Activated CD4-positive, alpha-beta T cell treated with anti-CD3 and anti-CD28 coated beads for 36 hours (primary cell): ENCODE measurements at regions of chr4 and their contacts with region 1.

Region 1: DNA sequence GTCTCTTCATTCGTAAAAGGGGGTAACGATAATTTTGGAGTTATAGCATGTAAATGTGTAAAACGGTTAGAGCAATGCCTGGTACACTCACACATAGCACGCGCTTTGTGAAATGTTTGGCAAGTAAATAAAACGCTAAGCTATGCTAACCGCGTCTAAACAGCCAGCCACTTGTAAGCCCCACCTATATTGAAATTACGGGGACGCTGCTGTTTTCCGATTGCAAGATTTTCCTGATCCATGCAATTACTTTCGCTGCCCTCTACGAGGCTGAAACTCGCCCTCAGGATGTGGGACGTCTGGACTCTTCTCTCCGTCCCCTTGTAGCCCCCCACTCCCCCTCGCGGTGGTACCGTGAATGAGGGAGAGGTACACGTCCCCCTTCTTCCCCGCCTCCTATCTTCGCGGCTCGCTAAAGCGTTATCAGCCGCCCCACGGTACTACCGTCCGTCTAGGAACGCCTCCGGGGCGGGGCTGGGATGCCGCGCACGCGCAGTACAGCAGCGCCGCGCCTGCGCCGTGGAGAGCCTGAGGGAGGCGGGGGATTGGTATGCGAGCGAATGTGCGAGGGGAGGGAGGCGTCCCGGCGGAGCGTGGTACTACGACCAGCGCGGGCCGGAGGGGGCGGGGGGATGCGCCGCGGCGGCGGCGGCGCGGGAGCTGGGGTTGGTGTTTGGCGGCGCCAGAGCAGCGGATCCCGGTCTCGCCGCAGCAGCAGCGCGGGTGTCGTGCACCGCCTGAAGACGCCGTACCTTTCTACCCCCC is at the start of gene STIM2:
- DNase-seq: peak; percentile 98
- ATAC-seq: peak; percentile 68
- H3K4me3 Mint-ChIP-seq: peak within 1 kb of the TSS; percentile 91
- H3K27ac Mint-ChIP-seq: peak within 1 kb of the TSS; percentile 95
- H3K4me1 Mint-ChIP-seq: peaks cover 51% of the 10 kb centered on the region
- H3K27me3 Mint-ChIP-seq: no peaks in the 10 kb centered on the region
- total RNA-seq, gene STIM2: 32.9 to 36.4 TPM

Region 2: GRCh38 chr4:25234390-25235370 is 1625.7 kb before region 1 on chr4:
- CTCF ChIA-PET with region 1: no interaction called
- POLR2A ChIA-PET with region 1: no interaction called
- intact Hi-C with region 1: loop called in 1 of 2 experiments (anchors 10 kb)
- DNase-seq: peak; percentile 58
- ATAC-seq: peak; percentile 62
- H3K4me3 Mint-ChIP-seq: peak overlapping the region; percentile 91
- H3K27ac Mint-ChIP-seq: peak overlapping the region; percentile 97
- H3K4me1 Mint-ChIP-seq: peaks cover 45% of the 10 kb centered on the region
- H3K27me3 Mint-ChIP-seq: no peaks in the 10 kb centered on the region

Region 3: DNA sequence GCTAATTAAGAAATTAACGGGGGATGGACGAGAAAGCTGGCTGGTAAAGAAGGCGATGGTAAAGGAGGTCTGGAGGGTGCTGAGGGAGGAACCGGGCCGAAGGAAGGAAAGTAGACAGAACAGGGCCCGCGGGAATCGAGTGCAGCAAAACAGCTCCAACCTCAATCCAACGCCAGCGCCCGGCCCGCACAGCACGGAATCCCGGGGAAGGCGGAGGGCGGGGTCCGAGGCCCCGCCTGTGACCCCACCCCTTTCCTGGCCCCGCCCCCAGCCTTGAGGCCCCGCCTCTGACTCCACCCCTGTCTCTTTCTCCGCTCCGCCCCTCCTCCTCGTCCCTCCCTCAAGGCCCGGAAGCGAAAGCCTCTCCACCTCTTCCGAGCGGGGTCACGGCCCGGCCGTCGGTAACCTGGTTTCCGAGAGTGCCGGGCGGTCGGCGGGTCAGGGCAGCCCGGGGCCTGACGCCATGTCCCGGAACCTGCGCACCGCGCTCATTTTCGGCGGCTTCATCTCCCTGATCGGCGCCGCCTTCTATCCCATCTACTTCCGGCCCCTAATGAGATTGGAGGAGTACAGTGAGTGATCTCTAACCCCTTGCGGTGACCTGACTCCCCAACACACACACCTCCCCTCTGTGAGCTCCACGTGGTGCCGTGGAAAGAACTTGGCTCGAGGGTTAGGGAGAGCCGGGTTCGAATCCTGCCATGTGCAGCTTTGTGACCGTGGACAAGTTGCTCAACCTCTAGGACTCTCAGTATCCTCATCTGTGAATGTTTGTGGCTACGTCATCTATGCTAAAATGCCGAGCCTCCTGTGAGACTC is 946.3 kb before region 1 on chr4 and contains the start of gene SMIM20:
- CTCF ChIA-PET with region 1: no interaction called
- POLR2A ChIA-PET with region 1: no interaction called
- intact Hi-C with region 1: loop called in 1 of 2 experiments (anchors 1 kb)
- DNase-seq: peak; percentile 94
- ATAC-seq: peak; percentile 96
- H3K4me3 Mint-ChIP-seq: peak within 1 kb of the TSS; percentile 93
- H3K27ac Mint-ChIP-seq: peak within 1 kb of the TSS; percentile 93
- H3K4me1 Mint-ChIP-seq: peaks cover 22% of the 10 kb centered on the region
- H3K27me3 Mint-ChIP-seq: no peaks in the 10 kb centered on the region
- total RNA-seq, gene SMIM20: 15.6 to 23.0 TPM

Region 4: GRCh38 chr4:26410385-26411293 is 449.7 kb before region 1 on chr4:
- CTCF ChIA-PET with region 1: no interaction called
- POLR2A ChIA-PET with region 1: no interaction called
- intact Hi-C with region 1: no loop called
- DNase-seq: peak; percentile 32
- ATAC-seq: peak; percentile 75
- H3K4me3 Mint-ChIP-seq: no peak overlapping the region
- H3K27ac Mint-ChIP-seq: no peak overlapping the region
- H3K4me1 Mint-ChIP-seq: peaks cover 3% of the 10 kb centered on the region
- H3K27me3 Mint-ChIP-seq: no peaks in the 10 kb centered on the region

Region 5: GRCh38 chr4:26459054-26459755 is 401.1 kb before region 1 on chr4:
- CTCF ChIA-PET with region 1: no interaction called
- POLR2A ChIA-PET with region 1: no interaction called
- intact Hi-C with region 1: loop called in 1 of 2 experiments (anchors 2 kb)
- DNase-seq: no peak
- ATAC-seq: peak; percentile 84
- H3K4me3 Mint-ChIP-seq: peak overlapping the region; percentile 4
- H3K27ac Mint-ChIP-seq: no peak overlapping the region
- H3K4me1 Mint-ChIP-seq: peaks cover 19% of the 10 kb centered on the region
- H3K27me3 Mint-ChIP-seq: no peaks in the 10 kb centered on the region

Region 6: DNA sequence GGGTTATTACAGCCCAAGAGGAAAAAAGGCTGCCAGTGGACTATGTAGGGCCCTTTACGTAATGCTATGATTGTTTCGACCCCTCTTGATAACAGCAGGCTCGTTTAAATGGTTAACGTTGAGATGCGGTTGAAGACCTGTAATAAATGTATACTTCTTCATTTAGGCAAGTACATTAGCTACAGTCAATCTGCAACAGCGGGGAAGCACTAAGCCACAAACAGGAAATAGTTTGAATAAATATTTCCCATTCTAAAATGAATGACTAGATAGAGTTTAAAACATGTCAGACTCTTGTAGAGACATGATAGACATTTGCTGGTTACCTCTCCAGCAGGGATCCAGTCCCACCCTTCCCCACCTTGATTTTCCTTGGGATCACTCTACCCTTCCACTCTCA is 37.8 kb before region 1 on chr4:
- CTCF ChIA-PET with region 1: interaction called, 3 read pairs
- POLR2A ChIA-PET with region 1: no interaction called
- intact Hi-C with region 1: loop called in 1 of 2 experiments (anchors 2 kb)
- DNase-seq: peak; percentile 20
- ATAC-seq: peak; percentile 74
- H3K4me3 Mint-ChIP-seq: no peak overlapping the region
- H3K27ac Mint-ChIP-seq: peak overlapping the region; percentile 29
- H3K4me1 Mint-ChIP-seq: peaks cover 13% of the 10 kb centered on the region
- H3K27me3 Mint-ChIP-seq: no peaks in the 10 kb centered on the region

Region 7: GRCh38 chr4:26885912-26886274 is 25.6 kb after region 1 on chr4:
- CTCF ChIA-PET with region 1: interaction called, 15 read pairs
- POLR2A ChIA-PET with region 1: interaction called, 22 read pairs
- intact Hi-C with region 1: loop called (anchors 1 kb)
- DNase-seq: peak; percentile 29
- ATAC-seq: peak; percentile 63
- H3K4me3 Mint-ChIP-seq: peak overlapping the region; percentile 67
- H3K27ac Mint-ChIP-seq: peak overlapping the region; percentile 92
- H3K4me1 Mint-ChIP-seq: peaks cover 64% of the 10 kb centered on the region
- H3K27me3 Mint-ChIP-seq: no peaks in the 10 kb centered on the region